Activated B cell treated with CpG ODN at 0.5 μM for 24 hours (primary cell): ENCODE measurements at regions of chr6 and their contacts with region 1.

Region 1: GRCh38 chr6:112180095-112180820 is 74.1 kb downstream of the LAMA4 start:
- DNase-seq: no peak
- ATAC-seq: peak; percentile 57
- H3K4me3 Mint-ChIP-seq: no peak overlapping the region
- H3K27ac Mint-ChIP-seq: no peak overlapping the region
- H3K4me1 Mint-ChIP-seq: no peaks in the 10 kb centered on the region
- H3K27me3 Mint-ChIP-seq: peaks cover 12% of the 10 kb centered on the region
- CTCF ChIP-seq: no peak

Region 2: DNA sequence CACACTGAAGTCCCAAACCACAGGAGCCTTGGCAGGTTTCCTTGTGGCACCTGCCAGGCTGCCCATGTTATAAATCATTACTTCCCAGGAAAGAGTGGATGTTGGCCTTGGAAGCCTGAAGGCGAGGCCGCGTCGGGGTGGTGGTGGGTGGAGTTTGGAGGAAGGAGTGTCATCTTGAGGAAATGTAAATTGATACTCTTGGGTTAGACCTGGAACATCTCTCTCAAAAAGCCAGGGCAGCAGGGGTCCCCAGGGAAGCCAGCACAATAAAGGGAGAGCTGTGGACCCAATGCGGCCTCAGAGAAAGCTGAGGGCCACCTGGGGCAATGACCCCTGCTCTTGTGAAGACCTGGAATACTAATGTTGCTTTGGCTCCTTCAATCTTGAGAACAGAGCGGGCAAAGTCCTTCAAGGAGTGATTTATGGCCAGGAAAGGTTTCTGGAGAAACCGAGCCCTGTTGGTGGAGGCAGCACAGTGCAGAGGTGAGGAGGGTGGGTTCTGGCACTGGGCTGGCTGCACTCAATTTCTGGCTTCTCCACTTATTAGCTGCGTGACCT is 548.3 kb before region 1 on chr6:
- CTCF ChIA-PET with region 1: no interaction called
- POLR2A ChIA-PET with region 1: no interaction called
- intact Hi-C with region 1: no loop called
- DNase-seq: no peak
- ATAC-seq: no peak
- H3K4me3 Mint-ChIP-seq: no peak overlapping the region
- H3K27ac Mint-ChIP-seq: no peak overlapping the region
- H3K4me1 Mint-ChIP-seq: no peaks in the 10 kb centered on the region
- H3K27me3 Mint-ChIP-seq: peaks cover 10% of the 10 kb centered on the region
- CTCF ChIP-seq: no peak

Region 3: DNA sequence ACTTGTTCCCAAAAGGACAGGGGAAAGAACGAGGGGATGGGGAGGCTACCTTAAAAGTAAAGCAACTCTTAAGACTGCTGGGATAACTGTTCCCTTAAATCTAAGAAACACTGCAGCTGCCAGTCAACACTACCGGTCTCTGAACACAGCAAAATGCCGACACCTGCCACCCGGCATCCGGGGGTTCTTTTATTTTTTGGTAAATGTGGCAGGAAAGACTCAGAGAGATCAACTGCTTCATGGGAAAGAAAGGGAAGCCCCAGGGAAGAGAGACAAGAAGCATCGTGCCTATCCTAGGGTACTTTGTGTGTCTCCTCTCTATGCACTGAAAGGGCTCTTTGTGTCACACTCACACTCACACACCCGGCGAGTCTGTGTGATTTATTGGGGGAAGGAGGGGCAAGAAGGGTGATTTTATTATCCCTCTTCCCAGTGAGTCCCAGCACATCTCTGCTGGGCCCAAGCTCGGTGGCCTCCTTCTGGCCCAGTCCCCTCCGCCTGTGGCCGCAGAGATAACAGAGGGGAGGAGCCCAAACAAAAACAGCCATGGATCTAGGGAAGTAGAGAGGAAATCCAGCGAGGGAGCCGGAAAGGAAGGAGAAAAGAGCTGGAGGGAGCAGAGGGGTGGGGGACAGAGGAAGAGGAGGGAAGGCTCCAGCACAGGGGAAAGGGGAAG is 308.4 kb before region 1 on chr6:
- CTCF ChIA-PET with region 1: no interaction called
- POLR2A ChIA-PET with region 1: no interaction called
- intact Hi-C with region 1: no loop called
- DNase-seq: no peak
- ATAC-seq: no peak
- H3K4me3 Mint-ChIP-seq: peak overlapping the region; percentile 91
- H3K27ac Mint-ChIP-seq: peak overlapping the region; percentile 80
- H3K4me1 Mint-ChIP-seq: peaks cover 44% of the 10 kb centered on the region
- H3K27me3 Mint-ChIP-seq: no peaks in the 10 kb centered on the region
- CTCF ChIP-seq: no peak

Region 4: GRCh38 chr6:112343390-112343789 is 163.1 kb after region 1 on chr6:
- CTCF ChIA-PET with region 1: no interaction called
- POLR2A ChIA-PET with region 1: no interaction called
- intact Hi-C with region 1: no loop called
- DNase-seq: no peak
- ATAC-seq: no peak
- H3K4me3 Mint-ChIP-seq: no peak overlapping the region
- H3K27ac Mint-ChIP-seq: no peak overlapping the region
- H3K4me1 Mint-ChIP-seq: no peaks in the 10 kb centered on the region
- H3K27me3 Mint-ChIP-seq: peaks cover 8% of the 10 kb centered on the region
- CTCF ChIP-seq: no peak

Region 5: DNA sequence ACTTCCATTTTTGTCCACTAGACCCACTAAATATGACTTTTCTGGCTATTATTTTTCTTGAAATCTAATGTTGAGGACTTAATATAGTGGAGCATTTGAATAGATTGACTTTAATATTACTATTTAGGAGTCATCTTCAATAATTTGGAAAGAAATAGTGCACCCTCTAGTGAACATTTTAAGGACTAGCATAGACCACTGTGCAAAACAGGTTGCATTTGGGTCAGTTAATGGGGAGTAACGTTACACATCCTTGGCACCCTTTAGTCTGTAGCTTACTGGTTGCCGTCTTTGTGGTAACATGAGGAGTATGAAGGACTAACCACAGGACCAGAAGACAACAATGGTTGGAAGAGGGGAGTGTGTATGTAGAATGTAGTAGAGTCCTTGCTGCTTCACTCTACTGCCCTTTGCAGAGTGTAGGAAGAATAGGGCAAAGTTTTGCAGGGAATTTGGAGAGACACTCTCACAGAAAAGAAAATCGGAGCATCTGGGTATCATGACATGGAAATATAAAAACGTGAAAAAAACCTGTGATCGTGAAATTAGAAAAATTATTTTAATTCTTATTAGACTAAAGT is 192.1 kb after region 1 on chr6:
- CTCF ChIA-PET with region 1: interaction called, 5 read pairs
- POLR2A ChIA-PET with region 1: no interaction called
- intact Hi-C with region 1: loop called (anchors 1 kb)
- DNase-seq: no peak
- ATAC-seq: no peak
- H3K4me3 Mint-ChIP-seq: no peak overlapping the region
- H3K27ac Mint-ChIP-seq: no peak overlapping the region
- H3K4me1 Mint-ChIP-seq: no peaks in the 10 kb centered on the region
- H3K27me3 Mint-ChIP-seq: peaks cover 2% of the 10 kb centered on the region
- CTCF ChIP-seq: no peak

Region 6: GRCh38 chr6:113879186-113880096 is 1699.2 kb after region 1 on chr6:
- CTCF ChIA-PET with region 1: interaction called, 33 read pairs
- POLR2A ChIA-PET with region 1: no interaction called
- intact Hi-C with region 1: loop called (anchors 1 kb)
- DNase-seq: no peak
- ATAC-seq: peak; percentile 100
- H3K4me3 Mint-ChIP-seq: no peak overlapping the region
- H3K27ac Mint-ChIP-seq: no peak overlapping the region
- H3K4me1 Mint-ChIP-seq: peaks cover 7% of the 10 kb centered on the region
- H3K27me3 Mint-ChIP-seq: peaks cover 5% of the 10 kb centered on the region
- CTCF ChIP-seq: no peak

Region 7: DNA sequence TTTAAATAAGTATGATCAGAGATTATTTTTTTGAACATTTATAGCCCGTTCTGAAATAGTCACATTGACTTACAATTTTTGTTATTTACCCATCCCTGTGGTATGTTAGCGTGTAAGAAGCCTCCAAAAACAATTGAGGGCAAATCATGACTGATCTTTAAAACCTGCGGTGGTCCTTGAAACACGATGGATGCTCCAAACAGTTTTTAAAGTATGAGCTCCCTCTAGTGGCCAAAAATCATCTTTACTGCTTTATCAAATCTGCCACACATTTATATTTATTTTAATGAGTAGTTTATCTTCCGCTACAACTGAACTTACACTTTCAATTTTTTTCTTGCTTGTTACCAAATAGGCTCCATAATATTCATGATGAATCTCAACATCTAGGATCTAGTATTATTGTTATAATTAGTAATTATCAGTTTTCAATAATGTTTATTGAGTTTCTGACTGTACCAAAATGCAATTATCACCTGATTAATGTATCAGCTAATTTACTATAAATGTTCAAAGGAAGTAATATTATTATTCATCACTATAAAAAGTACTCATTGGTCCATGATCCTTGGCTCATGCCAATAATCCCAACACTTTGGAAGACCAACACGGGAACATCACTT is 1729.1 kb after region 1 on chr6:
- CTCF ChIA-PET with region 1: interaction called, 26 read pairs
- POLR2A ChIA-PET with region 1: no interaction called
- intact Hi-C with region 1: loop called (anchors 1 kb)
- DNase-seq: no peak
- ATAC-seq: peak; percentile 37
- H3K4me3 Mint-ChIP-seq: no peak overlapping the region
- H3K27ac Mint-ChIP-seq: no peak overlapping the region
- H3K4me1 Mint-ChIP-seq: no peaks in the 10 kb centered on the region
- H3K27me3 Mint-ChIP-seq: peaks cover 2% of the 10 kb centered on the region
- CTCF ChIP-seq: peak; percentile 63

Region 8: DNA sequence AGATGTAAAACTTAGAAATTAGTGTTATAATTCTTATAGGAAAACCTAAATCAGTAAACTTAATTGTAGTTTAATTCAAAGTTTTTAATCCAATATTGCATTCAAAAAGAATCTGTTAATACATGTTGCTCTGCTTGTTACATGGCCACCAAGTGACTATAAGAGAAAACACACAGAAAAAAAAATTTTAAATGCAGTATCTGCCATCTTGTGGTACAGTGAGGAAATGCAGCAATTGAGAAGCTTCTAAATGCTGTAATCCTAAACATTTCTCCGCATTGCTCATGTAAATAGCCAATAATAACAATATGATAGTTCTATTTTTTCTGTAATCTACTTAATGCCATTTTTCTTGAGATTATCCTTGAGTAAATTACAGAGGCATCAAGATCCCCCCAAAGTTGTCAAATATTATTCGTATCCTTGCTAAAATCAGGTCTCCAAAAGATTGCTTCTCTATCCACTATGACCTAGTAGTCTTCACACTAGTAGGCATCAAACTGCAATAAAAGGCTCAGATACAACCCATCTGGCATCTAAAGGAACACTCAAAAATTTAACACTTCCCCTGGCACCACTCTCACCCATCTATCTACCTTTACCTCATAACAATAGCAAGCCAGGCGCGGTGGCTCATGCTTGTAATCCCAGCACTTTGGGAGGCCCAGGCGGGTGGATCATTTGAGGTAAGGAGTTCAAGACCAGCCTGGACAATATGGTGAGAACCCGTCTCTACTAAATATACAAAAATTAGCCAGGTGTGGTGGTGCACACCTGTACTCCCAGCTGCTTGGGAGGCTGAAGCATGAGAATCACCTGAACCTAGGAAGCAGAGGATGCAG is 1756.1 kb after region 1 on chr6:
- CTCF ChIA-PET with region 1: interaction called, 9 read pairs
- POLR2A ChIA-PET with region 1: no interaction called
- intact Hi-C with region 1: loop called (anchors 1 kb)
- DNase-seq: no peak
- ATAC-seq: peak; percentile 67
- H3K4me3 Mint-ChIP-seq: no peak overlapping the region
- H3K27ac Mint-ChIP-seq: no peak overlapping the region
- H3K4me1 Mint-ChIP-seq: no peaks in the 10 kb centered on the region
- H3K27me3 Mint-ChIP-seq: no peaks in the 10 kb centered on the region
- CTCF ChIP-seq: peak; percentile 92